ENCODE measurements at regions of chr6 and their contacts with region 1.

Region 1: DNA sequence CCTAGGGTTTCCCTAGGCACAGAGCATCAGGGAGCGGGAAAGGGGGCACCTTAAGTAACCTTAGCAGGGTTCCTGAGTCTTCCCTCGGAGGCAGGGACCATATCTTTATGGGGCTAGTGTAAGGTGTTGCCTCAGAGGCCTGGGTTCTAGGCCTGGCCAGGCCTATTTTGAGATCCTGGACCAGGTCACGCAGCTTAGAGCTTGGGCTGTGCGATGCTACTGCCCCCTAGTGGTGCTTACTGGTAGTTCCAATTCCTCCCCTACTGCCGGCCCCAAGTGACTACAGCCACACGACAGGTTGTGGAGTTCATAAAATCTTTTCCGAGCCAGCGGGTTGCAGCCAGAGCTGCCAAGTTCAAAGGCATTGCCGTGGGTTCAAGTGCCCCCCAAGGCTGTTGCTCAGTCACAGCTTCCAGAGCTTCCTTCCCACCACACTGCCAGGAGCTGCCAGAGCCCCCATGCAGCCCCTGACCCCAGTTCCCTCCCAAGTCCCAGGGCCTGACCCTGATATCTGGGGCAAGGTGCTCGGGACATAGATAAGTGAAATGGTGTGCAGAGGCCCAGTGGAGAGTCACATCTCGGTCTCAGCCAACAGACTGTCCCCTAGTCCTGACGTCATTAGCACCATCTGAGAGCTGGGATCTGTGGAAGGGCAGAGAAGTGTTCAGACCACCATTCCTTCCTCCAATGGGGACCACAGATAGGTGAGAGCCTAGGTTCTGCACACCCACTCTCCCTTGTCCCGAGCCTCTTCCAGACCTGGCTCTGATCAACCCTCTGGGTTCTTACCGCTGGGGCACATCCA is 3.3 kb downstream of the LRRC73 start:
- DNase-seq: peak; percentile 89
- H3K4me3 Mint-ChIP-seq: no peak overlapping the region
- H3K27ac Mint-ChIP-seq: no peak overlapping the region
- H3K4me1 Mint-ChIP-seq: peaks cover 5% of the 10 kb centered on the region
- H3K27me3 Mint-ChIP-seq: peaks cover 14% of the 10 kb centered on the region

Region 2: DNA sequence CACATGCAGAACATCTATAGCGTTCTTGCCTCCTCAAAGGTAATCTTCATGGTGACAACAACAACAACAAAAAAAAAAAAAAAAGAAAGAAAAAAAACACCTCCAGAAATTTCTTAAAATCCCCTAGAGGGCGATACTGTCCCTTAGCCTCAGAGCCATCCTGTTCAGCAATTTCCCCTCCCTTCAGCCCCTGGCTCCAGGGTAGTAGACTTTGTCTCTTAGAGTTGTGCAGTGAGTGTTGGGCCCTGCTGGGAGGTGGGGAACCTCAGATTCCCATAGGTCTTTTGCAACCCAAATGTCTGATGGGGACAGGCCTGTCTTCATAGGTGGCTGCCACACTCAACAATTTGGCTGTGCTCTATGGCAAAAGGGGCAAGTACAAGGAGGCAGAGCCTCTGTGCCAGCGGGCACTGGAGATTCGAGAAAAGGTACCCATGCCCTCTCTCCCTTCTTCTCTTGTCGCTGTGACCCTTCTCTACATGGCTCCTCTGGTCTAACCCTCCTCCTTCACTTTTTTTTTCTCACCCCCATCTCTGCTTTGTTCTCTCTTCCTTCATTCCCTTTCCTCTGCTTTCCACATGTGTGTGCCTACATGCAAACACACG is 436.7 kb before region 1 on chr6:
- CTCF ChIA-PET with region 1: no interaction called
- intact Hi-C with region 1: loop called (anchors 10 kb)
- DNase-seq: peak; percentile 37
- H3K4me3 Mint-ChIP-seq: no peak overlapping the region
- H3K27ac Mint-ChIP-seq: no peak overlapping the region
- H3K4me1 Mint-ChIP-seq: no peaks in the 10 kb centered on the region
- H3K27me3 Mint-ChIP-seq: no peaks in the 10 kb centered on the region

Region 3: DNA sequence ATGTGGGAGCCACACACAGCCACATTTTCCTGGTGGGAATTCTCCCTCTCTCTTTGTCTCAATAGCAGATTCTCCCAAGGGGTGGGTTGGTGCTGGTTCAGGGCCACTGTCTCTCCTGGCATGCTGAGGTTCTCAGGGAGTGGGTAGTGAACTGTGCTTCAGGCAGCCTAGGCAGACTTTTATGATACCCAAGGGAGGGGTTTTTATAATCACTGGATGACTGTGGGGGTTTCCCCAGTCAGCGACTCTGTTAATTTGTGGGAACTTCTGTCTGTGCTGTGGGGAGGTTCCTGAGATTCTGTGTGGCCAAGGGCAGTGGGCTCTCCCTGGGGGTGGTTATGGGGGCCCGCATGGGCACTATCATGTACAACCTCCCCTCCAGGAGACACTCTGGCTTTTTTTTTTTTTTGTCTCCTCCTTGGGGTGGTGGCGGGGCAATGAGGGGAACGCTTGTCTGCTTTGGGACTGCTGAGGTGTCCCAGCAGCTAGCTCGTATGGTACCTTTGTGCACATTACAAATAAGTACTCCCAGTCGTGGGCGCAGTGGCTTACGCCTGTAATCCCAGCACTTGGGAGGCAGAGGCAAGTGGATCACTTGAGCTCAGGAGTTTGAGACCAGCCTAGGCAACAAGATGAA is 420.7 kb before region 1 on chr6:
- CTCF ChIA-PET with region 1: no interaction called
- intact Hi-C with region 1: no loop called
- DNase-seq: peak; percentile 62
- H3K4me3 Mint-ChIP-seq: no peak overlapping the region
- H3K27ac Mint-ChIP-seq: no peak overlapping the region
- H3K4me1 Mint-ChIP-seq: peaks cover 6% of the 10 kb centered on the region
- H3K27me3 Mint-ChIP-seq: no peaks in the 10 kb centered on the region

Region 4: GRCh38 chr6:43263314-43264178 is 243.3 kb before region 1 on chr6:
- CTCF ChIA-PET with region 1: interaction called, 22 read pairs
- intact Hi-C with region 1: loop called (anchors 1 kb)
- DNase-seq: peak; percentile 88
- H3K4me3 Mint-ChIP-seq: no peak overlapping the region
- H3K27ac Mint-ChIP-seq: no peak overlapping the region
- H3K4me1 Mint-ChIP-seq: no peaks in the 10 kb centered on the region
- H3K27me3 Mint-ChIP-seq: no peaks in the 10 kb centered on the region

Region 5: GRCh38 chr6:43369174-43370022 is 137.5 kb before region 1 on chr6 and contains the start of gene ZNF318:
- CTCF ChIA-PET with region 1: no interaction called
- intact Hi-C with region 1: loop called (anchors 1 kb)
- DNase-seq: peak; percentile 95
- H3K4me3 Mint-ChIP-seq: peak within 1 kb of the TSS; percentile 87
- H3K27ac Mint-ChIP-seq: peak within 1 kb of the TSS; percentile 90
- H3K4me1 Mint-ChIP-seq: peaks cover 36% of the 10 kb centered on the region
- H3K27me3 Mint-ChIP-seq: no peaks in the 10 kb centered on the region
- total RNA-seq, gene ZNF318: 9.3 to 9.9 TPM

Region 6: DNA sequence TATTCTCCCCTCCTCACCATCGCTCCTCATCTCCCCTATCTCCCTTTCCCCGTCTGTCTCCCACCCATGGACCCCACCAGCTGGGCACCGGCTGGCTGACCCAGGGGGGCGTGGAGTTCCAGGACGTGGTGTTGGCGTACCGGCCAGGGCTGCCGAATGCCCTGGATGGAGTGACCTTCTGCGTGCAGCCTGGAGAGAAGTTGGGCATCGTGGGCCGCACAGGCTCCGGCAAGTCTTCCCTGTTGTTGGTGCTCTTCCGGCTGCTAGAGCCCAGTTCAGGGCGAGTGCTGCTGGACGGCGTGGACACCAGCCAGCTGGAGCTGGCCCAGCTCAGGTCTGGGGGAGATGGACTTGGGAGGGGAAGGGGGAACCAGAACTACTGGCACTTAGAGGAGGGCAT is 59.3 kb before region 1 on chr6:
- CTCF ChIA-PET with region 1: interaction called, 69 read pairs
- intact Hi-C with region 1: no loop called
- DNase-seq: no peak
- H3K4me3 Mint-ChIP-seq: no peak overlapping the region
- H3K27ac Mint-ChIP-seq: no peak overlapping the region
- H3K4me1 Mint-ChIP-seq: no peaks in the 10 kb centered on the region
- H3K27me3 Mint-ChIP-seq: no peaks in the 10 kb centered on the region

Region 7: DNA sequence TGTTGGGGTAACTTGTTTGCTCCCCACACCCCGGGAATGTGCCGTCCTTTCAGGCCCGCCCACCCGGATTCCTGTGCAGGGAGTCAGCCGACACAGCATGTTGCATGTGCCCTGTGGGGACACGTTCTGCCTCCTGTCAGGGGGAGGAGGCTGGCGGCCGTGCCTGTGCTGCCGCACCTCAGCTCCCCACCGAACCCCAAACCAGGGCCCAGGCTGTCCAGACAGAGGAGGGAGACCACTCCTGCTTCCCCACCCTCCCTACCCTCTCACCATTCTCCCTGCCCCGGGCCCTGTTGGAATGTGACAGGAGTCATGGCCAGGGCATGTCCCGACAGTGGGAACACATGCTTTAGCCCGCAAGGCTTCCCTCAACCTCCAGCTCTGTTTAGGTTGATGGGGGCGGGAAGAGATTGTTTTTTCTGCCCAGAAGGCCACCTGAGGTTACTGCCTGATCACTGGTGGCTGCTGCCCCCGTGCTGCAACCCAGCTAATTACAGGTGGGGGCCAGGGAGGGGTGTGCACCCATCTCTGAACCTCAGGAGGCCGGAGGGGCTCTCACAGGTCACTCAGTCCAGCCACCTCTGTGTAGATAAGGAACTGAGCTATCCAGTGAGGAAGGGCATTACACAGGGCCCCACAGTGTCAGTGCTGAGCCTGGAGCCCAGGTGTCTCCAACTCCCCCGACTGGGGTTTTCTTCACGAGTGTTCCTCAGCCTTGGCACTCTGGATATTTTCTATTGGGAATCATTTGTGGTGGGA is 10.3 kb before region 1 on chr6:
- CTCF ChIA-PET with region 1: interaction called, 14 read pairs
- intact Hi-C with region 1: no loop called
- DNase-seq: no peak
- H3K4me3 Mint-ChIP-seq: no peak overlapping the region
- H3K27ac Mint-ChIP-seq: no peak overlapping the region
- H3K4me1 Mint-ChIP-seq: peaks cover 17% of the 10 kb centered on the region
- H3K27me3 Mint-ChIP-seq: no peaks in the 10 kb centered on the region

Region 8: GRCh38 chr6:43524483-43524961 is 17.7 kb after region 1 on chr6:
- CTCF ChIA-PET with region 1: interaction called, 12 read pairs
- intact Hi-C with region 1: no loop called
- DNase-seq: no peak
- H3K4me3 Mint-ChIP-seq: no peak overlapping the region
- H3K27ac Mint-ChIP-seq: peak overlapping the region; percentile 65
- H3K4me1 Mint-ChIP-seq: peaks cover 3% of the 10 kb centered on the region
- H3K27me3 Mint-ChIP-seq: no peaks in the 10 kb centered on the region

Measured in activated naive CD4-positive, alpha-beta T cell treated with anti-CD3 and anti-CD28 coated beads for 36 hours (primary cell).